ENCODE measurements at regions of chr6 and their contacts with region 1.

Region 1: DNA sequence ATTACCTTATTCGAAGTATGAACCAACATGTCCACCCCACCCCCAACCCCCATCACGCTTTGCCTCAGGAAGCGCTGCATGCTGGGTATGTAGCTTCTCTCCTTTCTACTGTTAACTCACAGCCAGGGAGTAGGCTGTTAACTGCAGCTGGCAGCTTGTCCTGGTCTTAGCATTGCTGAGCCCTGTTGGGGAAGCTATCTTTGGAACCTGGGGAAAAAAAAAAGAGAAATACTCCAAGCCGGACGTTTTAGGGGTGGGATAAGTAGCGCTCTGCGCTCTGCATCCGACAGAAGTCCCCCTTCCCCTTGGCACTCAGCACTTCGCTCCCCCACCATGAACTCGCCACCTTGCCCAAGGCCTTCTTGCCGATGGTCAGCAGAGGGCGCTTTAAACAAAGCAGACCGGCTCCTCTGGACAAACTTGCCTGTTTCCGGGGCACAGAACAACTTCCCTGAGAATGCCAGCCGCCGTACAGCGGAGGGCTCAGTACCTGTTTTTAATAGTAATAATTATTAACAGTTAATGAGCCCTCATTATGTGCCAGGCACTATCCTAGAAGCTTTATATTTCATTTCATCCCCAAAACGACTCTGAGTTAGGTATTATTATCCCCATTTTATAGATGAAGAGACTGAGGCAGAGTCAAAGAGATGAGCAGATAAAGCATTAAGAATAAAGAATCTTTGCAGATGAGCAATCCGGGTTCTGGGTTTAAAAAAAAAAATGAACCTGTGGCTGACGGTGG is 35.2 kb upstream of the MDFI start:
- DNase-seq: peak; percentile 65
- H3K4me3 ChIP-seq: no peak overlapping the region
- H3K27ac ChIP-seq: no peak overlapping the region
- H3K4me1 ChIP-seq: no peaks in the 10 kb centered on the region
- H3K27me3 ChIP-seq: no peaks in the 10 kb centered on the region
- CTCF ChIP-seq: peak; percentile 93 to 95

Region 2: DNA sequence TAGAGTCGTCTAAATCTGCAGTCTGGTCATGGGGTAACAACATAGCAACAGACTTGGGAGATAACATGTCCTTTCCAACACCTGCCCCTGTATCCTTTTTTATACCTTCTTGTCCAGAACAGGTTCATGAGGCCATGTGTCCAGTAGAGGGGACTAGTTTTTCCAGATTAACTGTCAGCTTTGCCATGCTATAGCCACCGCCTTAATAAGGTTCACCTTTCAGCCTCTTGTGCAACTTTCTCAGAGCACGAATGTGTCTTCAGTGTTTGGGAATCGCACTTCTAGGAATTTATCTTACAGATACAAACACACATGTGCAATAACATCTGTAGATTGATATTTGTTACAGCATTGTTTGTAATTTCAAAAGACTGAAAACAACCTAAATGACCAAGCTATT is 246.2 kb before region 1 on chr6:
- CTCF ChIA-PET with region 1: no interaction called
- dilution Hi-C with region 1: no loop called
- in situ Hi-C with region 1: no loop called
- intact Hi-C with region 1: no loop called
- DNase-seq: no peak
- H3K4me3 ChIP-seq: no peak overlapping the region
- H3K27ac ChIP-seq: no peak overlapping the region
- H3K4me1 ChIP-seq: no peaks in the 10 kb centered on the region
- H3K27me3 ChIP-seq: no peaks in the 10 kb centered on the region
- CTCF ChIP-seq: no peak

Region 3: DNA sequence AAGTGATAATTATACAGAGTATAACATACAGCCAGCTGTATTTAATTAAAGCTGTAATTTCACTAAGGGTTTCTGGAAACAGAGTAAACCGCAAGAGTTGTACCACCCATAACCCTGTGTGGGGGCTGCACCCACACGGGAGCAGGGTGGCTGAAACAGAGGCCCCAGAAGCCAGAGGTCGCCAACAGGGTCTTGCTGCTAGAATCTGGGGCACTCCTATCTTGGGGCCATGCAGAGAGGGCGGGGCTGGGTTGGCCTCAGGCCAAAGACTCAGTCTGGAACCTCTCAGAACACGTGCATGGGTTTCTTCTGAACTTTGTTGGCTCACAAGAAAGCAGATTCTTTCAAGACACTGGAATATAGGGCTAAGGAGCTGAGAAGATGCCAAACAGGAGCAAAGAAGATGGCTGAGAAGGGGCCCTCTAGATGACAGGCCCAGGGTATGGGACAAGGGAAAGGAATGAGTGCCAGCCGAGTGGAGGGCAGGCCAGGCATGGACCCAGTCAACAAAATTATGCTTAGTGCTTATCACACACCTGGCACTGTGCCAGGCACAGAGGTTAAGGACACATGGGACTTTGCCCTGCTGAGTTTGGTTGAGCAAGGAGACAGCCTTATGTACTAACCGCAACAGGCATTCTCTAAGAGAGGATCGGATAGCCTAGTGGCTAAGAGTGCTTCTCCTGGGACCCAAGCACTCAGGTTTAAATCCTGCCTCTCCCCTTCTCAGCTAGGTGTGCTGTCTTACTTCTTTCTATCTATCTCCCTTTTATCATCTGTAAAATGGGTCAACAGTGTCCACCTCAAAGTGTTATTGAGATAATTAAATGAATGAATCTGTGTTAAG is 153.4 kb before region 1 on chr6:
- CTCF ChIA-PET with region 1: no interaction called
- dilution Hi-C with region 1: no loop called
- in situ Hi-C with region 1: no loop called
- intact Hi-C with region 1: no loop called
- DNase-seq: no peak
- H3K4me3 ChIP-seq: no peak overlapping the region
- H3K27ac ChIP-seq: no peak overlapping the region
- H3K4me1 ChIP-seq: no peaks in the 10 kb centered on the region
- H3K27me3 ChIP-seq: no peaks in the 10 kb centered on the region
- CTCF ChIP-seq: no peak

Region 4: GRCh38 chr6:41505122-41506049 is 97.7 kb before region 1 on chr6:
- CTCF ChIA-PET with region 1: no interaction called
- dilution Hi-C with region 1: loop called (anchors 5 kb)
- in situ Hi-C with region 1: no loop called
- intact Hi-C with region 1: no loop called
- DNase-seq: peak; percentile 27
- H3K4me3 ChIP-seq: no peak overlapping the region
- H3K27ac ChIP-seq: no peak overlapping the region
- H3K4me1 ChIP-seq: peaks cover 9% of the 10 kb centered on the region
- H3K27me3 ChIP-seq: peaks cover 13% of the 10 kb centered on the region
- CTCF ChIP-seq: no peak

Region 5: GRCh38 chr6:41518118-41518517 is 84.9 kb before region 1 on chr6:
- CTCF ChIA-PET with region 1: no interaction called
- dilution Hi-C with region 1: no loop called
- in situ Hi-C with region 1: no loop called
- intact Hi-C with region 1: no loop called
- DNase-seq: no peak
- H3K4me3 ChIP-seq: no peak overlapping the region
- H3K27ac ChIP-seq: no peak overlapping the region
- H3K4me1 ChIP-seq: no peaks in the 10 kb centered on the region
- H3K27me3 ChIP-seq: no peaks in the 10 kb centered on the region
- CTCF ChIP-seq: no peak

Region 6: GRCh38 chr6:41636833-41637193 is 33.8 kb after region 1 on chr6:
- CTCF ChIA-PET with region 1: interaction called, 3 read pairs
- dilution Hi-C with region 1: no loop called
- in situ Hi-C with region 1: no loop called
- intact Hi-C with region 1: loop called (anchors 1 kb)
- DNase-seq: peak; percentile 91
- H3K4me3 ChIP-seq: peak overlapping the region; percentile 54 to 80 (median 76)
- H3K27ac ChIP-seq: peak overlapping the region; percentile 83
- H3K4me1 ChIP-seq: peaks cover 41% of the 10 kb centered on the region
- H3K27me3 ChIP-seq: no peaks in the 10 kb centered on the region
- CTCF ChIP-seq: no peak

Region 7: GRCh38 chr6:41644297-41644879 is 41.4 kb after region 1 on chr6:
- CTCF ChIA-PET with region 1: no interaction called
- dilution Hi-C with region 1: no loop called
- in situ Hi-C with region 1: no loop called
- intact Hi-C with region 1: loop called (anchors 2 kb)
- DNase-seq: peak; percentile 73
- H3K4me3 ChIP-seq: no peak overlapping the region
- H3K27ac ChIP-seq: no peak overlapping the region
- H3K4me1 ChIP-seq: peaks cover 45% of the 10 kb centered on the region
- H3K27me3 ChIP-seq: no peaks in the 10 kb centered on the region
- CTCF ChIP-seq: no peak

Region 8: DNA sequence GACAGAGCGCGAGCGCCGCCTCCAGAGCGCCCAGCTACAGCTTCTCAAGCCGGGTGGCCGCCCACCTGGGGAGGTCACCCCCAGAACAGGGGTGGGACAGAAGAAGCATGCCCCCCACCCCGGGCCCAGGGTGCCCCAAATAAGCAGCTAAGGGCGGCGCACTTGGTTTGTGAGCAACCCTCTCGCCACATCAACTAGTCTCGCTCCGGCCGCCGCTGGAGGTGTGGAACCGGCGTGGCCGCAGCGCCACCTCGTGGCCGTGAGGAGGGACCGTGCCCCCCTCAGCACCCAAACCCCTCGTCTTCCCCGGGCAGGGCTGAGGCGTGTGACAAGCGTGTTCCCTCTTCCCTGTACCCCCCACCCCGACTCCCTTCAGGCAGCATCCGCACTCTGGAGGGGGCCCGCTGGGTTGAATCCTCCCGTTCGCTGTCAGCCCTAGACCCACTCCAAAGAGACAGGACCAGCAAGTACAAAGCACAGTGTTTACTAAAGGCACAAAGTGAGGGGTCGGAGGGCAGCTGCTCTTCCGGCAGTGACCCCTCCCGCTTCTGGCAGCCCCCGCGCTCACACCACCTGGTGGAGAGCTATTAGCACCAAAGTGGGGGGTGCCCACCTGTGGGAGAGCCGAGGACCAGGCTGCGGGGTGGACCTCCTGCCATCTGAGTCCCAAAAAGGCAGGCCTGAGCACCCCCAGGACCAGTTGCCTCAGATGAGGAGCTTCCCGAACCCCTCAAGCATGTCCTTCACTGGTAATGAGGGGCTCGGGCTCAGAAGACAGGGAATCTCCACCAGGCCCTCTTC is 80.7 kb after region 1 on chr6:
- CTCF ChIA-PET with region 1: interaction called, 6 read pairs
- dilution Hi-C with region 1: no loop called
- in situ Hi-C with region 1: loop called (anchors 5 kb)
- intact Hi-C with region 1: loop called (anchors 1 kb)
- DNase-seq: peak; percentile 39
- H3K4me3 ChIP-seq: no peak overlapping the region
- H3K27ac ChIP-seq: no peak overlapping the region
- H3K4me1 ChIP-seq: peaks cover 3% of the 10 kb centered on the region
- H3K27me3 ChIP-seq: no peaks in the 10 kb centered on the region
- CTCF ChIP-seq: peak; percentile 75 to 85

Region 9: GRCh38 chr6:41920921-41921711 is 318.1 kb after region 1 on chr6 and contains the starts of genes BYSL and MED20:
- CTCF ChIA-PET with region 1: no interaction called
- dilution Hi-C with region 1: no loop called
- in situ Hi-C with region 1: no loop called
- intact Hi-C with region 1: no loop called
- DNase-seq: peak; percentile 98
- H3K4me3 ChIP-seq: peak within 1 kb of the TSS; percentile 75 to 92 (median 87)
- H3K27ac ChIP-seq: peak within 1 kb of the TSS; percentile 100
- H3K4me1 ChIP-seq: peaks cover 34% of the 10 kb centered on the region
- H3K27me3 ChIP-seq: no peaks in the 10 kb centered on the region
- CTCF ChIP-seq: peak; percentile 87 to 96
- total RNA-seq, gene BYSL: 14.2 to 52.5 TPM
- total RNA-seq, gene MED20: 22.4 to 23.7 TPM